K562 (cell line): ENCODE measurements at regions of chr6 and their contacts with region 1.

Region 1: GRCh38 chr6:109783250-109783986 is 92.3 kb downstream of the FIG4 start:
- DNase-seq: peak; percentile 14 to 52 (median 24)
- ATAC-seq: peak; percentile 86
- H3K4me3 ChIP-seq: no peak overlapping the region
- H3K27ac ChIP-seq: no peak overlapping the region
- H3K4me1 ChIP-seq: no peaks in the 10 kb centered on the region
- H3K27me3 ChIP-seq: no peaks in the 10 kb centered on the region; a peak in 1 of 5 replicates
- CTCF ChIP-seq: peak; percentile 65 to 80 (median 67)
- EP300 ChIP-seq: no peak
- POLR2A ChIP-seq: no peak
- RAD21 ChIP-seq: peak; percentile 88 to 91

Region 2: GRCh38 chr6:109491207-109491938 is 292.0 kb before region 1 on chr6:
- CTCF ChIA-PET with region 1: no interaction called
- POLR2A ChIA-PET with region 1: no interaction called
- in situ Hi-C with region 1: no loop called
- intact Hi-C with region 1: no loop called
- DNase-seq: peak in 1 of 4 experiments; percentile 47
- ATAC-seq: peak; percentile 83
- H3K4me3 ChIP-seq: no peak overlapping the region
- H3K27ac ChIP-seq: peak overlapping the region; percentile 50; the same call in 1 of the 3 replicates
- H3K4me1 ChIP-seq: peaks cover 0 to 17% of the 10 kb centered on the region in 2 experiments; a peak in 3 of 5 replicates
- H3K27me3 ChIP-seq: peaks cover under 1 to 4% of the 10 kb centered on the region in 2 experiments; a peak in 3 of 5 replicates
- CTCF ChIP-seq: no peak
- EP300 ChIP-seq: 0 out of 2 replicates have a peak, but pooled peaks have one; percentile 21
- POLR2A ChIP-seq: no peak
- RAD21 ChIP-seq: no peak

Region 3: DNA sequence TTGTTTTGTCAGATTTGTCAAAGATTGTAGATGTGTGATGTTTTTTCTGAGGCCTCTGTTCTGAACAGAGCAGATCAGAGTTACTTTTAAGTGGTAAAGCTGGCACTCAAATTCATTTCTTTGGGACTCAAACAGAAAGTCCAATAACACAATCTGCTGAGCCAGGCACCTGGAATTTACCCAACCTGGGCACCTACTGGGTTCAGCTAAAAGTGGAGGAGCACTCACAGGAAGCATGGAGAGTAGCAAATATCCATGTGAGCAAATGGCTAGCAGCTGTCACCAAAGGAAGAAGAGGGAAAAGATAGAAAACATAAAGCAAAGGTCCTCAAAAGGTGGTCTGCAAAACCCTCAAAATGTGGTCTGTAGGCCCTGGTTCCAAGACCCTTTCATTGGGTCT is 24.5 kb after region 1 on chr6:
- CTCF ChIA-PET with region 1: no interaction called
- POLR2A ChIA-PET with region 1: no interaction called
- in situ Hi-C with region 1: no loop called
- intact Hi-C with region 1: no loop called
- DNase-seq: no peak
- ATAC-seq: no peak
- H3K4me3 ChIP-seq: no peak overlapping the region
- H3K27ac ChIP-seq: no peak overlapping the region
- H3K4me1 ChIP-seq: peaks cover 0 to 4% of the 10 kb centered on the region in 2 experiments; a peak in 2 of 5 replicates
- H3K27me3 ChIP-seq: peaks cover 0 to 3% of the 10 kb centered on the region in 2 experiments; a peak in 1 of 5 replicates
- CTCF ChIP-seq: no peak
- EP300 ChIP-seq: no peak
- POLR2A ChIP-seq: no peak
- RAD21 ChIP-seq: no peak

Region 4: DNA sequence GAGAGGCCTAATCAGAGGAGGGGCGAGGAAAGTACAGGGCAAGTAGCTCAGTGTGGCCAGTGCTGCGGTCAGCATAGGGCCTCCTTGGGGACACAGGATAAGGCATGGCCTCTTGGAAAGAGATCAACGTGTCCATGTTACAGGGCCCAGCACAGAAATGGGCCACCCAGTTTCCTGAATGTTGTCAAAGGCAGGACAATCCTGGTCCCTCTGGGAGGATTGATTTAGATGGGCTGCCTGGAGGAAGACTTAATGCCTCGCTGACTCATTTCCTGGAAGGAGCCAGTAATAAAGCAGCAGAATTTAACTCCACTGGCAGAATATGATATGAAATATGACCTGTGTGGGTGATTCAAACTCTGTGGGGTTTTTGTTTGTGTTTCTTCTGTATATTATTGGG is 615.4 kb after region 1 on chr6:
- CTCF ChIA-PET with region 1: no interaction called
- POLR2A ChIA-PET with region 1: no interaction called
- in situ Hi-C with region 1: no loop called
- intact Hi-C with region 1: loop called (anchors 10 kb)
- DNase-seq: peak in 2 of 4 experiments; percentile 14 to 30
- ATAC-seq: peak; percentile 74
- H3K4me3 ChIP-seq: no peak overlapping the region
- H3K27ac ChIP-seq: no peak overlapping the region
- H3K4me1 ChIP-seq: peaks cover 9 to 11% of the 10 kb centered on the region in 2 experiments; a peak in 3 of 5 replicates
- H3K27me3 ChIP-seq: peaks cover 0 to 14% of the 10 kb centered on the region in 2 experiments; a peak in 3 of 5 replicates
- CTCF ChIP-seq: no peak
- EP300 ChIP-seq: no peak
- POLR2A ChIP-seq: no peak
- RAD21 ChIP-seq: no peak